Mammary epithelial cell (primary cell): ENCODE measurements at regions of chr1 and their contacts with region 1.

Region 1: DNA sequence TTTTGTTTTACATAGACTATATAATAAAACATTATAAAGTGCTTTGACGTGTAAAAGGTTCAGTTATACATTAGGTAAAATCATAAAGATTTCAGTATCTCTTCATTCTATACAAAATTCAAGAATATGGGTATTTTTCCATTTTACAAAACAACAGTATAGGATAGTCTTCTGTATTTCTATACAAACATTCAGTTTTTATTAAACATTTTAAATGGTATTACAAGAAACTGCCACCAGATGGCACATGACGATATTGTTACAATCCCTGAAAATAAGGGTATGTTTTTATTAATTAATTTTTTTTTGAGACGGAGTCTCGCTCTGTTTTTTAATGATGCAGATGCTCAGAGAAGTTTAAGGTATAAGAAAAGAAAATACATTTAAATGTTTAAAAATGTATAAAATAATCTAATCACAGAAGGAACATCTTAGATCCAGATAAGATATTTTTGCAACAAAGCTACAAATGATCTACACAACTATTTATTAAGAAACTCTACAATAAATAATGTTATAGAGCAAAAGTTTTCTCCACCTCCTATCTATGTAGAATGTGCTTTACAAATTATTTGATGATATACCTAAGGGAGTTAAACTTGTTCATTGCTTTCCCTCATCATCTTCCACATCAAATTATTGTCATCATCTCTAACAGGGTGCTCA is 23.5 kb upstream of the RSBN1 start:
- DNase-seq: peak; percentile 35
- H3K4me3 ChIP-seq: no peak overlapping the region
- H3K27ac ChIP-seq: no peak overlapping the region
- H3K4me1 ChIP-seq: peaks cover 6% of the 10 kb centered on the region
- H3K27me3 ChIP-seq: no peaks in the 10 kb centered on the region
- CTCF ChIP-seq: peak; percentile 21 to 51

Region 2: GRCh38 chr1:113928941-113929749 is 93.4 kb after region 1 on chr1 and contains the start of gene HIPK1:
- CTCF ChIA-PET with region 1: no interaction called
- dilution Hi-C with region 1: no loop called
- in situ Hi-C with region 1: no loop called
- intact Hi-C with region 1: loop called (anchors 2 kb)
- DNase-seq: peak; percentile 86
- H3K4me3 ChIP-seq: peak within 1 kb of the TSS; percentile 47 to 95 (median 86)
- H3K27ac ChIP-seq: peak within 1 kb of the TSS; percentile 89
- H3K4me1 ChIP-seq: peaks cover 23% of the 10 kb centered on the region
- H3K27me3 ChIP-seq: no peaks in the 10 kb centered on the region
- CTCF ChIP-seq: no peak
- total RNA-seq, gene HIPK1: 29.3 to 38.4 TPM

Region 3: GRCh38 chr1:113963281-113963906 is 127.6 kb after region 1 on chr1:
- CTCF ChIA-PET with region 1: interaction called, 11 read pairs
- dilution Hi-C with region 1: no loop called
- in situ Hi-C with region 1: no loop called
- intact Hi-C with region 1: no loop called
- DNase-seq: no peak
- H3K4me3 ChIP-seq: no peak overlapping the region
- H3K27ac ChIP-seq: no peak overlapping the region
- H3K4me1 ChIP-seq: no peaks in the 10 kb centered on the region
- H3K27me3 ChIP-seq: no peaks in the 10 kb centered on the region
- CTCF ChIP-seq: peak in 1 of 2 donors; percentile 23

Region 4: GRCh38 chr1:114282751-114283403 is 447.1 kb after region 1 on chr1:
- CTCF ChIA-PET with region 1: no interaction called
- dilution Hi-C with region 1: no loop called
- in situ Hi-C with region 1: loop called in 1 of 2 experiments (anchors 25 kb)
- intact Hi-C with region 1: loop called (anchors 5 kb)
- DNase-seq: peak; percentile 64
- H3K4me3 ChIP-seq: no peak overlapping the region
- H3K27ac ChIP-seq: no peak overlapping the region
- H3K4me1 ChIP-seq: no peaks in the 10 kb centered on the region
- H3K27me3 ChIP-seq: no peaks in the 10 kb centered on the region
- CTCF ChIP-seq: peak; percentile 85 to 93